Ascending aorta (tissue), 2 donors: ENCODE measurements at regions of chr12 and their contacts with region 1.

Region 1: GRCh38 chr12:132710422-132711168 is at the start of gene PGAM5:
- DNase-seq: peak; percentile 30 to 87
- H3K4me3 ChIP-seq: peak within 1 kb of the TSS; percentile 83 to 90
- H3K27ac ChIP-seq: peak within 1 kb of the TSS; percentile 58 to 79
- H3K4me1 ChIP-seq: peaks cover 0 to 14% of the 10 kb centered on the region in 2 donors
- H3K27me3 ChIP-seq: no peaks in the 10 kb centered on the region
- CTCF ChIP-seq: no peak
- total RNA-seq, gene PGAM5: 41.2 TPM

Region 2: DNA sequence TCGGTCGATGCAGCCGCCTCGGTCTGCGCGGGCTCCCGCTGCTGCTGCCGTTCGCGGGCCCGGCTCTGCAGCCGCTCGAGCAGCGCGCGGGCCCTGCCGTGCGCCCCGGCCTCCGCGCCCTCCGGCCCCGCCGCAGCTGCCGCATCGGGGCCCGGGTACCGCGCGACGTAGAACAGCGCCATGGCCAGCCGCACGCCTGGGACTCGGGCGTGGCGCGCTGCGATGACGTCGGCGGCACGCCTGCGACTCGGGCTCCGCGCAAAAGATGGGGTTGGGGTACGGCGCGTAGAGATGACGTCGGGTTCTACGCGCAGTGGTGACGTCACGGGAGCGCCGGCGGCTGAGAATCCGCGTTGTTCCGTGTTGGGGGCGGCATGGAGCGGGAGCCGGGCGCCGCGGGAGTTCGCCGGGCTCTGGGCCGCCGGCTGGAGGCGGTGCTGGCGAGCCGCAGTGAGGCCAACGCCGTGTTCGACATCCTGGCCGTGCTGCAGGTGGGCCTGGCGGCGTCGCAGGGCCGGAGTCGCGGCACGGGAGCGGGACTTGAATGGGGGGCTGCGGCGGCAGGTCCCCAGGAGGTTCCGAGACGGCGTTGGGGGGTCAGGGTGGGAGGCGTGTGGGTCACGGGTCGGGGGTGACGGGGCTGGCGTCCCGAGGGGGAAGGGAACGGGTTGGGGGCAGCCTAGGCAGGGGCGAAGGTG is 566.3 kb before region 1 on chr12 and contains the starts of genes DDX51 and NOC4L:
- intact Hi-C with region 1: loop called (anchors 2 kb)
- DNase-seq: peak; percentile 74 to 96
- H3K4me3 ChIP-seq: peak within 1 kb of the TSS; percentile 97 to 99
- H3K27ac ChIP-seq: peak within 1 kb of the TSS; percentile 91 to 93
- H3K4me1 ChIP-seq: peaks cover 4 to 16% of the 10 kb centered on the region in 2 donors
- H3K27me3 ChIP-seq: no peaks in the 10 kb centered on the region
- CTCF ChIP-seq: no peak
- total RNA-seq, gene DDX51: 4.3 TPM
- total RNA-seq, gene NOC4L: 9.2 TPM

Region 3: DNA sequence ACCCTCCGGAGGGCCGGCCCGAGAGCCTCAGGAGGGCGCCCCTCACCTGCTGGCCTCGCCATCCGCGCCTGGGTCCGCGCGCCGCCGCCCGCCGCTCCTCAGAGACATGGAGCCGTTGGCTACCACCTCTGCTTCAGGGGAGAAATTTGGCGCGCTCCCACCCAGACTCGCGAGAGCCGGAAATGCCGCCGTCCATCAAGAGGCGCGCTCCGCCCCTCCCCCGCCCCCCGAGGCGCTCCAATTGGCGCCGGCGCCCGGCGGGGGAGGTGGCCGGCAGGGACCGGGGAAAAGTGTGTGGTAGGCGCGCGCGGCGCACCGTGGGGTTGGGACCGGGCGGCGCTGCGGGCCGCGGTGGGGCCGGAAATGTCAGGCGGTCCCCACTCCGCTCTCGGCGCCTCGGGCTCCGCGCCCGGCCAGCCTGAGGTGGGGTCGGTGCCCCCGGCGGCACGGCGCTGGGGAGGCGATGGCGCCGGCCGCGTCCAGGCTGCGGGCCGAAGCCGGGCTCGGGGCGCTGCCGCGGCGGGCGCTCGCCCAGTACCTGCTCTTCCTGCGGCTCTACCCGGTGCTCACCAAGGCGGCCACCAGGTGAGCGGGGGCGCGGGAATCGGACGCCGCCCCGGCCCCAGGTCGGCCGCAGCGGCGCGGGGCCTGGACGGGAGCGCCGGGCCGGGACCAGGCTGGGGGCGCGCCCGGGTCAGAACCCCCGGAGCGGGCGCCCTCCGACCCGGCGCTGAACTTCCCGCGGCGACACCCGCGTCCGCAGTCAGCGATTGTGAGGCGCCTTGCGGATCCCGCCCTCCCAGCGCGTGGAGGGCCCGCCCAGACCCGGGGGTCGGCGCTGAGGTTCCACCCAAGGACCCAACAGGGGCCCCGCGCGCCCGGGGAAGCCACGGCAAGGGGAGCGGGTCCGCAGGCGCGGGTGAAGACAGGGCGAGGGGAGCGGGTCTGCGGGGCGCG is 23.1 kb before region 1 on chr12 and contains the starts of genes POLE and PXMP2:
- intact Hi-C with region 1: loop called (anchors 1 kb)
- DNase-seq: peak; percentile 84 to 98
- H3K4me3 ChIP-seq: peak within 1 kb of the TSS; percentile 91 to 94
- H3K27ac ChIP-seq: peak within 1 kb of the TSS; percentile 67 to 75
- H3K4me1 ChIP-seq: peaks cover 4 to 19% of the 10 kb centered on the region in 2 donors
- H3K27me3 ChIP-seq: no peaks in the 10 kb centered on the region
- CTCF ChIP-seq: peak in 1 of 3 experiments; percentile 44
- total RNA-seq, gene POLE: 115 TPM
- total RNA-seq, gene PXMP2: 18.8 TPM

Region 4: GRCh38 chr12:132761032-132761920 is 50.7 kb after region 1 on chr12 and contains the start of gene ANKLE2:
- intact Hi-C with region 1: loop called (anchors 1 kb)
- DNase-seq: peak in 1 of 2 donors; percentile 73
- H3K4me3 ChIP-seq: peak within 1 kb of the TSS; percentile 100
- H3K27ac ChIP-seq: peak within 1 kb of the TSS; percentile 97 to 99
- H3K4me1 ChIP-seq: peaks cover 13% of the 10 kb centered on the region in 2 donors
- H3K27me3 ChIP-seq: no peaks in the 10 kb centered on the region
- CTCF ChIP-seq: no peak
- total RNA-seq, gene ANKLE2: 54.2 TPM

Region 5: GRCh38 chr12:132783917-132784531 is 73.4 kb after region 1 on chr12:
- intact Hi-C with region 1: no loop called
- DNase-seq: no peak
- H3K4me3 ChIP-seq: no peak overlapping the region
- H3K27ac ChIP-seq: no peak overlapping the region
- H3K4me1 ChIP-seq: no peaks in the 10 kb centered on the region
- H3K27me3 ChIP-seq: no peaks in the 10 kb centered on the region
- CTCF ChIP-seq: no peak

Region 6: DNA sequence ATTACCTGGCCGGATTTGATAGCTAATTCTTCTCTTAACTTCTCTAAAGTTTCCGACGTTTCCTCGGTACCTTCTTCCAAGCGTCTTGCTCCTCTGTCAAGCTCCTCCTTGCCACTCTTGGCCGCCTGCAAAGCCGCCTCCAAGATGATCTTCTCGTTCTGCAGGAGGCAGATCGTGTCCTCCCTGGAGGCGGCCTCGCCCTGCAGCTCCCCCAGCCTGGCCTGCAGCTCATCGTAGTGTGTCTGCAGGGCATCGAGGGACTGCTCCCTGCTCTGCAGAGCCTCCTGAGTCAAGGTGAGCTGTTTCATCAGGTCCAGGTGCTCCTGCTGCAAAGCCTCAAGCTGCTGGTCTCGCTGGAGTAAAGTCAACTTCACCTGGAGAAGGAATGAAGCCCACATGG is 85.3 kb after region 1 on chr12:
- intact Hi-C with region 1: no loop called
- DNase-seq: no peak
- H3K4me3 ChIP-seq: no peak overlapping the region
- H3K27ac ChIP-seq: no peak overlapping the region
- H3K4me1 ChIP-seq: no peaks in the 10 kb centered on the region
- H3K27me3 ChIP-seq: no peaks in the 10 kb centered on the region
- CTCF ChIP-seq: no peak